Transverse colon (tissue), 4 donors: ENCODE measurements at regions of chr15 and their contacts with region 1.

Region 1: DNA sequence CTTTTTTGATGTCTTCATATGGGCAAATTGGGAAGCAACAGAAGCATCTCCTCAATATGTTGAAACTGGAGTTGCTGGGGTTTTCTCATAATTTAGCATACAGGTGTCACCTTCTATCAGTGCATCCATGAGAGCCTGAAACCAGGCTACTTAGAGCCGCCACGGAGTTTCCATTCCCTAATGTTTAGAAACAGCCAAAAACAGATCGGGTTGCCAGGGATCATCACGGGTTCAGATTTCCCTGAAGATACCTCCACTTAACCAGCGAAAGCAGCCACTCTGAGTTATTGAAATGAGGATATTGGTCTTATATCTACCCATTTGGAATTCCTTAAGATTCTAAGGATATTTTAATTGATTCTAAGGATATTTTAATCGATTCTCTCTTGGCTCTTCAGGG is 14.5 kb downstream of the TERB2 start:
- DNase-seq: no peak
- H3K4me3 ChIP-seq: no peak overlapping the region
- H3K27ac ChIP-seq: no peak overlapping the region
- H3K4me1 ChIP-seq: no peaks in the 10 kb centered on the region
- H3K27me3 ChIP-seq: no peaks in the 10 kb centered on the region
- CTCF ChIP-seq: no peak
- EP300 ChIP-seq: no peak
- POLR2A ChIP-seq: no peak

Region 2: DNA sequence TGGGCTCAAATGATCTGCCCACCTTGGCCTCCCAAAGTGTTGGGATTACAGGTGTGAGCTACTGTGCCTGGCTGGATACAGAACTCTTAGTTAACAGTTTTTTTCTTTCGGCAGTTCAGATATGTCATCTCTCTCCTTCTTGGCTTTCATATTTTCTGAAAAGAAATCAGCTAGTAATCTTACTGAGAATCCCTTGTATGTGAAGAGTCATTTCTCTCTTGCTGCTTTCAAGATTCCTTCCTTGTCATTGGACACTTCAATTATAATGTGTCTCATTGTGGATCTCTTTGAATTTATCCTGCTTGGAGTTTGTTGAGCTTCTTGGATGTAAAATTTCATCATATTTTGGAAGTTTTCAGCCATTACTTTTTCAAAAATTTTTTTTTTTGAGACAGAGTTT is 217.7 kb before region 1 on chr15:
- in situ Hi-C with region 1: no loop called
- intact Hi-C with region 1: no loop called
- DNase-seq: no peak
- H3K4me3 ChIP-seq: no peak overlapping the region
- H3K27ac ChIP-seq: no peak overlapping the region
- H3K4me1 ChIP-seq: no peaks in the 10 kb centered on the region
- H3K27me3 ChIP-seq: no peaks in the 10 kb centered on the region
- CTCF ChIP-seq: no peak
- EP300 ChIP-seq: no peak
- POLR2A ChIP-seq: no peak

Region 3: DNA sequence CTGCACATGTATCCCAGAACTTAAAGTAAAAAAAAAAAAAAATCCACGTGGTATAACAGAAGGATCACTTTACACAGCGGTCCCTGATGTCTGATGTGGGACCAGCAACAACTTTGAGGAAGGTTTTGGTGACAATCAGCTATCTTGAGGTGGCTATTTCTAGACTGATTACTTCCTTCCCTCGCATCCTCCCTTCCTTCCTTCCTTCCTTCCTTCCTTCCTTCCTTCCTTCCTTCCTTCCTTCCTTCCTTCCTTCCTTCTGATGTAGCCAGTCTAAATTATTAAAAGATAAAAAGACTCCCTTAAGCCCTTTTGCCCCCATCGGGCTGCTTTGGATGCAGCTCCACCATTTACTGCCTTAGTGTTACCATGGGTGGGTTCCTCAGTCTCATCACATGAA is 66.9 kb after region 1 on chr15:
- in situ Hi-C with region 1: no loop called
- intact Hi-C with region 1: loop called (anchors 2 kb)
- DNase-seq: no peak
- H3K4me3 ChIP-seq: no peak overlapping the region
- H3K27ac ChIP-seq: peak overlapping the region; percentile 58 to 61 (median 60)
- H3K4me1 ChIP-seq: peaks cover 0 to 17% (median 5%) of the 10 kb centered on the region in 4 donors
- H3K27me3 ChIP-seq: no peaks in the 10 kb centered on the region
- CTCF ChIP-seq: no peak
- EP300 ChIP-seq: no peak
- POLR2A ChIP-seq: no peak

Region 4: GRCh38 chr15:45118131-45118588 is 147.1 kb after region 1 on chr15:
- in situ Hi-C with region 1: loop called in 1 of 4 experiments (anchors 25 kb)
- intact Hi-C with region 1: no loop called
- DNase-seq: peak; percentile 89
- H3K4me3 ChIP-seq: peak overlapping the region in 1 of 4 donors; percentile 27
- H3K27ac ChIP-seq: no peak overlapping the region
- H3K4me1 ChIP-seq: peaks cover 10 to 26% (median 18%) of the 10 kb centered on the region in 4 donors
- H3K27me3 ChIP-seq: peaks cover 78% of the 10 kb centered on the region
- CTCF ChIP-seq: peak; percentile 90 to 95 (median 92)
- EP300 ChIP-seq: no peak
- POLR2A ChIP-seq: no peak